ENCODE measurements at regions of chr3 and their contacts with region 1.

Region 1: DNA sequence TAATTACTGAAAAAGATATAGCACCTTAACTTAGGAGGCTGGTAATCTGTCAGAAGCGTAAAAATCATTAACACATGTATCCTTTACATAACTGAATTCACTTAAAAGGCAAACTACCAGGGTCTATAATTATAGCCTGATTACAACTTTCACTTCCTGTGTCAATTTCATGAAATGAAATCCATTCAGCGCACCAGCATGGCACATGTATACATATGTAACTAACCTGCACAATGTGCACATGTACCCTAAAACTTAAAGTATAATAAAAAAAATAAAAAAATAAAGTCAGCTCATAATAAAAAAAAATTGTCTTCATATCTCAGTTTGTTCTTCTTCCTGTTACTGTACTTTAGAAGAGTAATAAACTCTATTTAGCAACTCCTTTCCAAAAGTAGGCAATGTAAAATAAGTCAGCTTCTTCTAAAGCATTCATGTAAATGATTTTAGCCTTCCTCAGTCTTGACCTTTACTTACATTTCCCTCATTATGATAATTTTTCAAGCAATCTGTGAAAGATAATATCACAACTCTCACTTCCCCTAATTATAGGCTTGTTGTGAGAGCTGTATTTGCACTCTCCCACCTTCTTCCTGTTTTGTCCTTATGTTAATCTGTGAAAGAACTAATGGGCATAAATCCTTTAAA is 50.1 kb downstream of the KBTBD8 start:
- DNase-seq: no peak
- ATAC-seq: peak; percentile 89
- H3K4me3 Mint-ChIP-seq: peak overlapping the region; percentile 75
- H3K27ac Mint-ChIP-seq: peak overlapping the region; percentile 93
- H3K4me1 Mint-ChIP-seq: peaks cover 52% of the 10 kb centered on the region
- H3K27me3 Mint-ChIP-seq: no peaks in the 10 kb centered on the region
- CTCF ChIP-seq: no peak

Region 2: DNA sequence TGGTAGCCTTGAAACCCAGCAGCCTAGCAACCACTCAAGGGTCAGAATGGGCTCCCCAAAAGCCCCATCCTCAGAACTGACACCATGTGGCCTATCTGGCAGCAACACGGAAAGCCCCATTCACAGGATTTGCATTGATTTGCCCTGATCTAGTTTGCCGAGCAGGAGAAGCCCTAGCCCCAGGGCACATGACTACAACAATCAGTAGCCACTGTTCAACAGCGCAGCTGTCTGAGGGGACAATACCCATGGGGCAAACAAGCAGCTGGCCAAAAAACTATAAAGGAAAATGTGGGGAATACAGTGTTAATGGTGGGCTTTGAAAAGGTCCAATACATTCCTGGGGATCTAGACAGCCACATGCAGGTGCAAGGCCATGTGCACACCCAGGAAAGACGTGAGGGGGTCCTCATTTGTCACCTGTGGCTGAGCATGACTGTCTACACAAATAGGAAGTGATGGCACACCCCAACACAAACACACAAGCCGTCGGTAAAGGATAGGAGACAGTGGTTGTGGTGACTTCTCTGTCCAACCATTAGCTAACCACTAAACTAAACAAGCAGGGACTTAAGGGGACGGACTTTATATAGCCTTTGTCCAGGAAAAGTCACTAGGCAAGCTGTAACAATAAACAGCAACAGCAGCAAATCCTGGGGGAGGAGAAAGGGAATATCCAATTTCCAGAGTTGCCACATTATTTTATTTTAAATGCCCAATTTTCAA is 661.1 kb before region 1 on chr3:
- CTCF ChIA-PET with region 1: no interaction called
- POLR2A ChIA-PET with region 1: no interaction called
- intact Hi-C with region 1: loop called (anchors 5 kb)
- DNase-seq: no peak
- ATAC-seq: peak; percentile 76
- H3K4me3 Mint-ChIP-seq: peak overlapping the region; percentile 69
- H3K27ac Mint-ChIP-seq: peak overlapping the region; percentile 89
- H3K4me1 Mint-ChIP-seq: peaks cover 63% of the 10 kb centered on the region
- H3K27me3 Mint-ChIP-seq: no peaks in the 10 kb centered on the region
- CTCF ChIP-seq: no peak

Region 3: DNA sequence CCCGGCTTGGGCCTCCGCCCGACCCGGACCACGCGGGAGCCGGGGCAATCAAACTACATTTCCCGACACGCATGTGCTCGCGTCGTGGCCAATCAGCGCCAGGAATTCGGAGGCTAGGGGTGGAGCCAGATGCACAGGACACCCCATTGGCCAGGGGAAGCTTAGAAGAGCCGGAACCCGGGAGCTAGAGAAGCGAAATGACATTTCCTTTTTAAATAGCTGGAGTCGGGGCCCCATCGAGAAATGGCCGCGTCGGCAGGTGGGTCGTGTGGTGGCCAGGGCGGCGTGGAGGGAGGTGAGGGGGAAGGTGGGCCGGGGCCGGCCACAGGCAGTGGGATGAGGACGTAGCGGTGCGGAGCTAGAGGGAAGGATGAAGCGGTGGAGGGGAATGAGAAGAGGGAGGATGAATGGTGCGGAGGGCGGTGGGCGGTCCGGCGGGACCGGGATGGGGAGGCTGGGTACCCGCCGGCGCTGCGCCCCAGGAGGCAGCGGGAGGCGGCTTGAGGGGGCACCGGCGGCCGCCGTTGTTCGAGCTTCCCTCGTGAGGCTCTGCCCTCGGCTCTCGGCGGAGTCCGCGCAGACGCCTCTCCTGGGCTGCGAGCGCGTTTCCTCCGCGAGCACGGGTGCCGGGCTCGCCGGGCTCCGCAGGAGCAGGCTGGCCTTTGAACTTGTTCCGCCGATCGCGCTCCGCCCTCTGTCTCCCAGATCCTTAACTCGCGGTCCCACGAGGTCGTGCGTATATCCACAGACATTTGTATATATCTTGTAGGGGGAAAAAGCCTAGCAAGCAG is 49.9 kb before region 1 on chr3 and contains the start of gene KBTBD8:
- CTCF ChIA-PET with region 1: interaction called, 12 read pairs
- POLR2A ChIA-PET with region 1: interaction called, 112 read pairs
- intact Hi-C with region 1: loop called (anchors 1 kb)
- DNase-seq: peak; percentile 88
- ATAC-seq: peak; percentile 88
- H3K4me3 Mint-ChIP-seq: peak within 1 kb of the TSS; percentile 88
- H3K27ac Mint-ChIP-seq: peak within 1 kb of the TSS; percentile 93
- H3K4me1 Mint-ChIP-seq: peaks cover 47% of the 10 kb centered on the region
- H3K27me3 Mint-ChIP-seq: peaks cover 3% of the 10 kb centered on the region
- CTCF ChIP-seq: no peak
- total RNA-seq, gene KBTBD8: 45.4 and 53.3 TPM in 2 replicates

Region 4: DNA sequence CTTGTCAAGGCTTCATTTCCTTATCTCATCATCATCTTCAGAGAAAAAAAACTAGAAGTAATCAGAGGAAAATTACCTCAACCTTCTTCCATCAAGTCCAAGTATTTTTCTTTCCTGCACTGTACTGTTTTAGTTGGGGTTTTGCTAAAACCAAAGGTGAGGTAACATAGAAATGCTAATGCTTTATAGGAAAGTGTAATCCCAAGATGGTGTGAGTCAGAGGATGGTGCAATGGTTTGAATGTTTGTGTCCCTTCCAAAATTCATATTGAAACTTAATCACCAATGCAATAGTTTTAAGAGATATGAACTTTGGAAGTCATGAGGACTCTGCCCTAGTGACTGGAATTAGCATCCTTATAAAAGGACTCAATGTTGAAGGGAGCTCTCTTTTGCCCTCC is 29.5 kb after region 1 on chr3:
- CTCF ChIA-PET with region 1: interaction called, 4 read pairs
- POLR2A ChIA-PET with region 1: interaction called, 13 read pairs
- intact Hi-C with region 1: loop called (anchors 1 kb)
- DNase-seq: no peak
- ATAC-seq: no peak
- H3K4me3 Mint-ChIP-seq: no peak overlapping the region
- H3K27ac Mint-ChIP-seq: no peak overlapping the region
- H3K4me1 Mint-ChIP-seq: peaks cover 17% of the 10 kb centered on the region
- H3K27me3 Mint-ChIP-seq: no peaks in the 10 kb centered on the region
- CTCF ChIP-seq: no peak

Region 5: DNA sequence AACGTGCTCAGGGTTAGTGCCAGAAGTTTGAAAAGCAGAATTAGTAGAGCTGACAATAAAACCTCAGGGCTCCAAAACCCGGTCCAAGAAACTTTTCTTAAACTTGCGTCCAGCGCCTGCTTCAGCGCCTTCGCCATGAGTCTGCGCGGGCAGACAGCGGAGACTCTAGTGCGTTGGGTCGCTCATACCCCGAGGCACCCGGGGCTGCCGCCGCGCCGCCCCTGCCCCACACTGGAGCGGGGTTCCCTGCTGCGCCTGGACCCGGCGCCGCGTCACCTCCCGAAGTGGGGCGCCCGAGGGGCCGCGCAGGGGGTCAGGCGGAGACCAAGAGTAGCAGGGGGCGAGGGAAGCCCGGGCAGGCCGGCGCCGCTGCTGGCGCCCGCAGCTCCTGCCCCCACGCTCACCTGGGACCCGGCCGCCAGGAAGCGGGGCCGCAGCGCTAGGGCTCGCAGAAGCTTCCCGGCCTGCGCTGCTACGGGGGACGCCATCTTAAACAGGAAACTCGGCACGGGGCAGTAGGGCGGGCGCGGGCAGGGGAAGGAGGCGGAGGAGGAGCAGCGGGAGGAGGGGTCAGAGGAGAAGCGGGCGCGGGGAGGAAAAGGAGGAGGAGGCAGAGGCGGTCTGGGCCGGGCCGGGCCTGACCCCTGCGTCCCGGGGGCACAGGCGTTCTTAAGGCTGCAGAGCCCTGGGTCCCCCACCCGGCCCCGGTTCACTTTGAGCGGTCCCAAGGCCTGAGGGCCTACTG is 606.1 kb after region 1 on chr3 and contains the start of gene SUCLG2:
- CTCF ChIA-PET with region 1: interaction called, 3 read pairs
- POLR2A ChIA-PET with region 1: interaction called, 12 read pairs
- intact Hi-C with region 1: loop called (anchors 2 kb)
- DNase-seq: peak; percentile 80
- ATAC-seq: peak; percentile 83
- H3K4me3 Mint-ChIP-seq: peak within 1 kb of the TSS; percentile 86
- H3K27ac Mint-ChIP-seq: peak within 1 kb of the TSS; percentile 87
- H3K4me1 Mint-ChIP-seq: peaks cover 63% of the 10 kb centered on the region
- H3K27me3 Mint-ChIP-seq: no peaks in the 10 kb centered on the region
- CTCF ChIP-seq: no peak
- total RNA-seq, gene SUCLG2: 38.9 and 40.8 TPM in 2 replicates

Measured in activated B cell treated with CpG ODN at 0.5 μM for 24 hours (primary cell).